ENCODE measurements at regions of chr6 and their contacts with region 1.

Region 1: GRCh38 chr6:105484238-105485161 is 81.6 kb upstream of the PREP start:
- DNase-seq: no peak
- H3K4me3 ChIP-seq: no peak overlapping the region
- H3K27ac ChIP-seq: no peak overlapping the region
- H3K4me1 ChIP-seq: peaks cover 5% of the 10 kb centered on the region
- H3K27me3 ChIP-seq: no peaks in the 10 kb centered on the region
- CTCF ChIP-seq: peak; percentile 77 to 97 (median 79)
- EP300 ChIP-seq: no peak
- POLR2A ChIP-seq: no peak

Region 2: GRCh38 chr6:105409734-105410133 is 74.8 kb before region 1 on chr6:
- intact Hi-C with region 1: no loop called
- DNase-seq: no peak
- H3K4me3 ChIP-seq: no peak overlapping the region
- H3K27ac ChIP-seq: no peak overlapping the region
- H3K4me1 ChIP-seq: no peaks in the 10 kb centered on the region
- H3K27me3 ChIP-seq: no peaks in the 10 kb centered on the region
- CTCF ChIP-seq: no peak
- EP300 ChIP-seq: no peak
- POLR2A ChIP-seq: no peak

Region 3: GRCh38 chr6:105669232-105669631 is 184.7 kb after region 1 on chr6:
- intact Hi-C with region 1: no loop called
- DNase-seq: no peak
- H3K4me3 ChIP-seq: no peak overlapping the region
- H3K27ac ChIP-seq: no peak overlapping the region
- H3K4me1 ChIP-seq: no peaks in the 10 kb centered on the region
- H3K27me3 ChIP-seq: no peaks in the 10 kb centered on the region
- CTCF ChIP-seq: no peak
- EP300 ChIP-seq: no peak
- POLR2A ChIP-seq: no peak

Region 4: GRCh38 chr6:106223300-106223930 is 738.9 kb after region 1 on chr6:
- intact Hi-C with region 1: loop called in 2 of 4 experiments (anchors 5 to 10 kb)
- DNase-seq: peak in 4 of 5 donors; percentile 33 to 69 (median 49)
- H3K4me3 ChIP-seq: no peak overlapping the region
- H3K27ac ChIP-seq: no peak overlapping the region
- H3K4me1 ChIP-seq: no peaks in the 10 kb centered on the region
- H3K27me3 ChIP-seq: no peaks in the 10 kb centered on the region
- CTCF ChIP-seq: peak in 2 of 3 donors; percentile 57 to 62
- EP300 ChIP-seq: no peak
- POLR2A ChIP-seq: no peak